Endothelial cell of umbilical vein (primary cell): ENCODE measurements at regions of chr17 and their contacts with region 1.

Region 1: GRCh38 chr17:2380226-2380922 is 20.5 kb downstream of the MNT start:
- DNase-seq: no peak
- H3K4me3 ChIP-seq: no peak overlapping the region
- H3K27ac ChIP-seq: no peak overlapping the region
- H3K4me1 ChIP-seq: no peaks in the 10 kb centered on the region
- H3K27me3 ChIP-seq: no peaks in the 10 kb centered on the region
- CTCF ChIP-seq: no peak
- POLR2A ChIP-seq: no peak

Region 2: GRCh38 chr17:2157675-2158395 is 222.5 kb before region 1 on chr17:
- CTCF ChIA-PET with region 1: no interaction called
- POLR2A ChIA-PET with region 1: no interaction called
- dilution Hi-C with region 1: no loop called
- intact Hi-C with region 1: no loop called
- DNase-seq: no peak
- H3K4me3 ChIP-seq: no peak overlapping the region
- H3K27ac ChIP-seq: no peak overlapping the region
- H3K4me1 ChIP-seq: no peaks in the 10 kb centered on the region
- H3K27me3 ChIP-seq: no peaks in the 10 kb centered on the region
- CTCF ChIP-seq: no peak
- POLR2A ChIP-seq: no peak

Region 3: GRCh38 chr17:2406903-2407790 is 26.8 kb after region 1 on chr17:
- CTCF ChIA-PET with region 1: interaction called, 909 read pairs
- POLR2A ChIA-PET with region 1: no interaction called
- dilution Hi-C with region 1: no loop called
- intact Hi-C with region 1: no loop called
- DNase-seq: peak; percentile 84
- H3K4me3 ChIP-seq: no peak overlapping the region
- H3K27ac ChIP-seq: peak overlapping the region; percentile 74
- H3K4me1 ChIP-seq: peaks cover 33% of the 10 kb centered on the region
- H3K27me3 ChIP-seq: no peaks in the 10 kb centered on the region
- CTCF ChIP-seq: no peak
- POLR2A ChIP-seq: peak; percentile 41